CD8-positive, alpha-beta memory T cell (primary cell): ENCODE measurements at regions of chrX and their contacts with region 1.

Region 1: DNA sequence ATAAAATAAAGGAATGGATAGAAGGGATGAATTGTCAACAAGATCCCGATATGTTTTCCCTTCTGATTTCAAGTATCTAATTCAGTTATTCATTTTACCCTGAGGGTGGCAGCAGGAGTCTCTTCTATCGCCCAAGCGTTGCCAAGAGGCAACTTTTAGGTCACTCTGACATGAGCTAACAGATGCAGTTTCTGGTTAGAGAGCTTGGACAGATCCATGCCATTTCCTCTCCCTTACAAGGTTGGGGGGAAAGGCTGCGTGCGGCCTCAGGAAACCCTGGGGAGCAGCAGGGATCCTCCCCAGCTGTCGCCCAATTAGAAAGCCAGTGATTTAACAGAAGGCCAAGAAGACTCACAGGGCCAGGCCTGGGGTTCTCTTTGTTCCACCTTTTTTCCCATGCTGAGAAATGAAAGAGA is 35.3 kb upstream of the WAS start:
- DNase-seq: peak; percentile 3 to 49 (median 32)
- H3K4me3 ChIP-seq: no peak overlapping the region
- H3K4me3 Mint-ChIP-seq: no peak overlapping the region
- H3K27ac ChIP-seq: no peak overlapping the region
- H3K27ac Mint-ChIP-seq: peak overlapping the region in 1 of 8 donors; percentile 93
- H3K4me1 ChIP-seq: no peaks in the 10 kb centered on the region
- H3K4me1 Mint-ChIP-seq: peaks cover 1 to 3% (median 3%) of the 10 kb centered on the region in 3 donors
- H3K27me3 ChIP-seq: no peaks in the 10 kb centered on the region
- H3K27me3 Mint-ChIP-seq: peaks cover 0 to 7% of the 10 kb centered on the region in 2 donors

Region 2: GRCh38 chrX:48617542-48618340 is 30.6 kb before region 1 on chrX:
- CTCF ChIA-PET with region 1: no interaction called
- POLR2A ChIA-PET with region 1: no interaction called
- DNase-seq: no peak
- H3K4me3 ChIP-seq: no peak overlapping the region
- H3K4me3 Mint-ChIP-seq: no peak overlapping the region
- H3K27ac ChIP-seq: no peak overlapping the region
- H3K27ac Mint-ChIP-seq: no peak overlapping the region
- H3K4me1 ChIP-seq: no peaks in the 10 kb centered on the region
- H3K4me1 Mint-ChIP-seq: no peaks in the 10 kb centered on the region
- H3K27me3 ChIP-seq: no peaks in the 10 kb centered on the region
- H3K27me3 Mint-ChIP-seq: peaks cover 0 to 1% of the 10 kb centered on the region in 2 donors

Region 3: DNA sequence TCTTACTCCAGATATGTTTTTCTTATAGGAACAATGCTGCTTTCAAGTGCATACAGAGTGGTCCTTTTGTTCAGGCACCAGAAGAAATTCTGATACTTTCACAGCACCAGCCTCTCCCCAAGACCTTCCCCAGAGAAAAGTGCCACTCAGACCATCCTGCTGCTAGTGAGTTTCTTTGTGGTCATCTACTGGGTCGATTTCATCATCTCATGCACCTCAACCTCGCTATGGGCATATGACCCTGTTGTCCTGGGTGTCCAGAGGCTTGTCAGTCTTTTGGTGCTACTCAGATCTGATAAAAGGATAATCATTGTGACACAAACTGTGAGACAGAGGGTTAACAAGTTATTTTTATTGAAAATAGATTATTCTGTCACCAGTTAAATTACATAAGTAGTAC is 11.6 kb before region 1 on chrX:
- CTCF ChIA-PET with region 1: interaction called, 10 read pairs
- POLR2A ChIA-PET with region 1: no interaction called
- DNase-seq: no peak
- H3K4me3 ChIP-seq: no peak overlapping the region
- H3K4me3 Mint-ChIP-seq: no peak overlapping the region
- H3K27ac ChIP-seq: no peak overlapping the region
- H3K27ac Mint-ChIP-seq: no peak overlapping the region
- H3K4me1 ChIP-seq: peaks cover 7% of the 10 kb centered on the region
- H3K4me1 Mint-ChIP-seq: peaks cover under 1 to 5% (median under 1%) of the 10 kb centered on the region in 3 donors
- H3K27me3 ChIP-seq: no peaks in the 10 kb centered on the region
- H3K27me3 Mint-ChIP-seq: peaks cover 0 to 3% of the 10 kb centered on the region in 2 donors

Region 4: DNA sequence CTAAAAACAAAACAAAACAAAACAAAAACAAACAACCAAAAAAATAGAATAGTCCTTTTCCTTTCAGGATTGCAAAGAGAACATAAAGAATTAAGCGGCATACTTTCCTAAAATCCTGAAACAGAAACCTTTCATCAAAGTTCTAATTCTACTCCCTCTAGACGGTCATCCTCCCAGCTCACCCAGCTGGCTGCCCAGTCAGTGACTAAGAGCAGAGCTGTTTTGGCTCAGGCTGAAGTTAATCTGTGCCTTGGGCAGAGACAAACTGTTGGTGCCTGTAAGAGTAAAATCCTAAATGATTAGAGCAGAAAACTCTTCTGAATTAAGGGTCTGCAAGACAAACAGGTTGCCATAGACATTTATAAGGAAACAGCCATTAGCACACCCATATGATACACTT is 17.6 kb after region 1 on chrX:
- CTCF ChIA-PET with region 1: no interaction called
- POLR2A ChIA-PET with region 1: no interaction called
- DNase-seq: no peak
- H3K4me3 ChIP-seq: no peak overlapping the region
- H3K4me3 Mint-ChIP-seq: no peak overlapping the region
- H3K27ac ChIP-seq: no peak overlapping the region
- H3K27ac Mint-ChIP-seq: no peak overlapping the region
- H3K4me1 ChIP-seq: no peaks in the 10 kb centered on the region
- H3K4me1 Mint-ChIP-seq: peaks cover 5 to 6% (median 6%) of the 10 kb centered on the region in 3 donors
- H3K27me3 ChIP-seq: no peaks in the 10 kb centered on the region
- H3K27me3 Mint-ChIP-seq: peaks cover 0 to 1% of the 10 kb centered on the region in 2 donors

Region 5: DNA sequence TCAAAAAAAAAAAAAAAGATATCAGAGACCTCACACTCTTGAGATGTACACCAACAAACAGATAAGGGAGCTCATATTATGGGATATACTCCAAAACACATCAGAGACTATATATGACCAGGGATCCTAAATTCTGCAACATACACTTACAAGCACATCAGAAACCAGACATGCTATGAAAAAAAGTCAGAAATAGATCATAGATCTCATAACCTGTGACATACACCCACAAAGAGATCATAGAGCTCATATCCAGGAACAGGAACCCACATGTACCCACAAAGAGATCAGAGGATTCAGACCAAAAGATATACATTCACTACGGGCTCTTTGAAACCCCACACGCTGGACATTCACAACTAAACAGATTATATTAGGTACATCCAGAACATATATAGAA is 78.3 kb after region 1 on chrX:
- CTCF ChIA-PET with region 1: no interaction called
- POLR2A ChIA-PET with region 1: no interaction called
- DNase-seq: peak in 1 of 5 donors; percentile 34
- H3K4me3 ChIP-seq: no peak overlapping the region
- H3K4me3 Mint-ChIP-seq: peak overlapping the region in 1 of 7 donors; percentile 6
- H3K27ac ChIP-seq: no peak overlapping the region
- H3K27ac Mint-ChIP-seq: peak overlapping the region in 5 of 8 donors; percentile 34 to 87 (median 69)
- H3K4me1 ChIP-seq: peaks cover 24% of the 10 kb centered on the region
- H3K4me1 Mint-ChIP-seq: peaks cover 35 to 51% (median 42%) of the 10 kb centered on the region in 3 donors
- H3K27me3 ChIP-seq: no peaks in the 10 kb centered on the region
- H3K27me3 Mint-ChIP-seq: no peaks in the 10 kb centered on the region

Region 6: GRCh38 chrX:48789366-48790220 is 141.2 kb after region 1 on chrX:
- CTCF ChIA-PET with region 1: no interaction called
- POLR2A ChIA-PET with region 1: no interaction called
- DNase-seq: no peak
- H3K4me3 ChIP-seq: no peak overlapping the region
- H3K4me3 Mint-ChIP-seq: peak overlapping the region in 1 of 7 donors; percentile 33
- H3K27ac ChIP-seq: peak overlapping the region; percentile 77
- H3K27ac Mint-ChIP-seq: peak overlapping the region in 3 of 8 donors; percentile 17 to 62 (median 33)
- H3K4me1 ChIP-seq: no peaks in the 10 kb centered on the region
- H3K4me1 Mint-ChIP-seq: peaks cover 7 to 13% (median 9%) of the 10 kb centered on the region in 3 donors
- H3K27me3 ChIP-seq: no peaks in the 10 kb centered on the region
- H3K27me3 Mint-ChIP-seq: peaks cover 0 to 6% of the 10 kb centered on the region in 2 donors

Region 7: GRCh38 chrX:48891402-48892288 is 243.3 kb after region 1 on chrX:
- CTCF ChIA-PET with region 1: interaction called, 12 read pairs
- POLR2A ChIA-PET with region 1: no interaction called
- DNase-seq: peak; percentile 68 to 85 (median 73)
- H3K4me3 ChIP-seq: peak overlapping the region; percentile 49
- H3K4me3 Mint-ChIP-seq: peak overlapping the region; percentile 73 to 97 (median 84)
- H3K27ac ChIP-seq: peak overlapping the region; percentile 11
- H3K27ac Mint-ChIP-seq: peak overlapping the region in 7 of 8 donors; percentile 17 to 92 (median 71)
- H3K4me1 ChIP-seq: peaks cover 11% of the 10 kb centered on the region
- H3K4me1 Mint-ChIP-seq: peaks cover 15 to 31% (median 26%) of the 10 kb centered on the region in 3 donors
- H3K27me3 ChIP-seq: no peaks in the 10 kb centered on the region
- H3K27me3 Mint-ChIP-seq: peaks cover 0 to 5% of the 10 kb centered on the region in 2 donors

Region 8: DNA sequence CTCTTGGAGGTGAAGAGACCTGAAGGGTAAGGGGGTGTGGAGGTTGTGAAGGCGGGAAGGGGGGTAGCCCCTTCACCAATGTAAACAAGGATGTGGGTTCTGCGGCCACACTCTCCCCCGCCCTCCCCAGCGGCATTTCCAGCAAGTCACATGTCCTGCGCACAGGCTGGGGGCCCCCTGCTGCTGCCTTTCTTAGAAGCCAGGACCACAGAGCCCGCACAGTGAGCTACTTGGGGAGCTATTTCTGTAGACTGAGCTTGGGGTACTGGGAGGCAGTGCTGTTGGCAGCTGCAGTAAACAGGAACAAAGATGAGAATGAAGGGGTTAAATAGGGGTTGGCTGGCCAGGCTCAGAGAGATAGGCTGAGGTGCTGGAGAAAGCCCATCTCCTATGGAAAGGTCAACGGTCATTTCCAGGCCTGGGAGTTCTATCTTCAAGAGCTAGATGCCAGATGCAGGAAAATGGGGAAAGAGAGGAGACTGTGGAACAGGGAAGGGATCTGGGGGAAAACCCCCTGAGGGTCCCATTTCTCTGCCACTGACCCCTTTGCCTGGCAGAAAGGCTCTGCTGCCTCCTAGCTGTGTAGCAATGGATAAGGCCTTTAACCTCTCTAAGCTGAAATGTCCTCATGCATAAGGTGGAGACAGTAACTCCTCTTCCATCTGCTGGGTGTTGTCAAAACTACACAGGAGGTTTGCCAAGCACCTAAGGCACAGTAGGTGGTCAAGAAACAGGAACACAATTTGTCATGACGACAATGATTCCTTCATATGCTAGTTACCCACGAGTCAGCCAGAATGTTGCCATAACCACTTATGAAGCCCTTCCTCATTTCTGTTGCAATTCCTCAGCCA is 288.9 kb after region 1 on chrX:
- CTCF ChIA-PET with region 1: interaction called, 10 read pairs
- POLR2A ChIA-PET with region 1: no interaction called
- DNase-seq: peak; percentile 72 to 95 (median 92)
- H3K4me3 ChIP-seq: peak overlapping the region; percentile 58
- H3K4me3 Mint-ChIP-seq: peak overlapping the region; percentile 74 to 93 (median 86)
- H3K27ac ChIP-seq: peak overlapping the region; percentile 73
- H3K27ac Mint-ChIP-seq: peak overlapping the region; percentile 93 to 99 (median 94)
- H3K4me1 ChIP-seq: peaks cover 83% of the 10 kb centered on the region
- H3K4me1 Mint-ChIP-seq: peaks cover 79 to 92% (median 85%) of the 10 kb centered on the region in 3 donors
- H3K27me3 ChIP-seq: no peaks in the 10 kb centered on the region
- H3K27me3 Mint-ChIP-seq: peaks cover 0 to 5% of the 10 kb centered on the region in 2 donors

Region 9: DNA sequence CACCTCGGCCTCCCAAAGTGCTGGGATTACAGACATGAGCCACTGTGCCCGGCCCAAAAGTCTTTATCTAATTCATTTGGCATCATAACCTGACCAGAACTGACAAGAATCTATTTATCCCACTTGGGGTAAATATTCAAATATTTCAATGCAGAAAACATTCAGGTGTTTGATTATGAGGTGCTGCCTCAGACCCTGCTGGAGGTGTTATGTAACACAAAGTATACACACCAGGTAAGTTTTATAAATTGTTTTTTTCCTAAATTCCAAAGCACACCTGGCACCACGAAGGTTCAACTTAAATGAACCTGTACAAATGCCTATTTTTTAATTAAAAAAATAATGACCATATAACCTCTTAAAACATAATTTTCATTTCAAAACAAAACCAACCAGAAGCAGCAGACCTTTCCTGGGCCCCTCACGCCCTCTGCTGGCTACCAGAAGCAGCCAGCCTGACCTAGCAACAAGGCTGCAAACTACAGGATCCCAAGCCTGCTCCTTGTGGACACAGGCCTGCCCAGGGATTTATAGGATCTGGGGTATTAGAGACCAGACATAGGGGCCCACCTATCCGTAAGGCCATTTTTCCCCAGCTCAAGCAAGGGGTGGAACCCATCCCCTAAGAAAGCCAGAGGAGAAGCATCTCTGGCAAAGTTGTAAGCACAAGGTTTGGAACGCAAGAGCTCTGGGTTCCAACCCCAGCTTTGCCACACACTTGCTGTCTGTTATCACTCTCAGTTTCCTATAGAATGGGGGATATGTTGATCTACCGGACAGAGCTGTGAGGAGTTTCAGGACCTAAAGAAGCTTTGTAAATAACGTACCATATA is 297.4 kb after region 1 on chrX:
- CTCF ChIA-PET with region 1: interaction called, 17 read pairs
- POLR2A ChIA-PET with region 1: no interaction called
- DNase-seq: peak; percentile 24 to 68 (median 53)
- H3K4me3 ChIP-seq: no peak overlapping the region
- H3K4me3 Mint-ChIP-seq: peak overlapping the region in 2 of 7 donors; percentile 4 to 51
- H3K27ac ChIP-seq: no peak overlapping the region
- H3K27ac Mint-ChIP-seq: peak overlapping the region in 7 of 8 donors; percentile 22 to 92 (median 62)
- H3K4me1 ChIP-seq: peaks cover 41% of the 10 kb centered on the region
- H3K4me1 Mint-ChIP-seq: peaks cover 47 to 65% (median 62%) of the 10 kb centered on the region in 3 donors
- H3K27me3 ChIP-seq: no peaks in the 10 kb centered on the region
- H3K27me3 Mint-ChIP-seq: peaks cover 0 to 6% of the 10 kb centered on the region in 2 donors